ENCODE measurements at regions of chr6 and their contacts with region 1.

Region 1: GRCh38 chr6:108260809-108261569 is at the start of gene SNX3:
- DNase-seq: peak; percentile 88
- H3K4me3 Mint-ChIP-seq: peak within 1 kb of the TSS; percentile 90
- H3K27ac Mint-ChIP-seq: peak within 1 kb of the TSS; percentile 93
- H3K4me1 Mint-ChIP-seq: peaks cover 12% of the 10 kb centered on the region
- H3K27me3 Mint-ChIP-seq: peaks cover 6% of the 10 kb centered on the region
- total RNA-seq, gene SNX3: 68.5 and 72.5 TPM in 2 replicates

Region 2: DNA sequence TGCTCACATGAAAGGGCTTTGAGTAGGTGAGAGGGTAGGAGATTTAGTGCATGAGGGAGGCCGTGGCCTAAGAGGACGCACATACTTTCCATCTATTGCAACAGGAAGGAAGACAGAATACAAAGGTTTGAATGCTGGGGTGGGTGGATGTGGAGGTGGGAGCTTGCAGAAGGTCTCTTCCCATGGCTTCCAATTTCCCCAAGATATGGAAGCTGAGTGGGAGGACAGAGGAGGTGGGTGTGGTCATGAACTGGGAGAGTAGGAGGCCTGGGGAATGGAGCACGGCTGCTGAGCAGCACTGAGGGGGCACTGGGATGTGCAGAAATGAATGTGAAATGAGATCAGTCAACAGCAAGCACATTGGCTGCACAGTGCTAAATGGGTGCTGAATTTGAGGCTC is 507.2 kb before region 1 on chr6:
- intact Hi-C with region 1: no loop called
- DNase-seq: no peak
- H3K4me3 Mint-ChIP-seq: peak overlapping the region; percentile 2
- H3K27ac Mint-ChIP-seq: peak overlapping the region; percentile 65
- H3K4me1 Mint-ChIP-seq: peaks cover 36% of the 10 kb centered on the region
- H3K27me3 Mint-ChIP-seq: no peaks in the 10 kb centered on the region

Region 3: GRCh38 chr6:108074359-108075144 is 186.4 kb before region 1 on chr6 and contains the start of gene OSTM1:
- intact Hi-C with region 1: loop called (anchors 2 kb)
- DNase-seq: peak; percentile 92
- H3K4me3 Mint-ChIP-seq: peak within 1 kb of the TSS; percentile 85
- H3K27ac Mint-ChIP-seq: peak within 1 kb of the TSS; percentile 80
- H3K4me1 Mint-ChIP-seq: peaks cover 12% of the 10 kb centered on the region
- H3K27me3 Mint-ChIP-seq: peaks cover 25% of the 10 kb centered on the region
- total RNA-seq, gene OSTM1: 19.9 and 22.5 TPM in 2 replicates

Region 4: GRCh38 chr6:108250240-108250866 is 10.6 kb before region 1 on chr6:
- intact Hi-C with region 1: no loop called
- DNase-seq: no peak
- H3K4me3 Mint-ChIP-seq: no peak overlapping the region
- H3K27ac Mint-ChIP-seq: no peak overlapping the region
- H3K4me1 Mint-ChIP-seq: peaks cover 13% of the 10 kb centered on the region
- H3K27me3 Mint-ChIP-seq: no peaks in the 10 kb centered on the region

Region 5: GRCh38 chr6:108348655-108349349 is 87.8 kb after region 1 on chr6:
- intact Hi-C with region 1: loop called (anchors 5 kb)
- DNase-seq: no peak
- H3K4me3 Mint-ChIP-seq: no peak overlapping the region
- H3K27ac Mint-ChIP-seq: peak overlapping the region; percentile 64
- H3K4me1 Mint-ChIP-seq: peaks cover 27% of the 10 kb centered on the region
- H3K27me3 Mint-ChIP-seq: no peaks in the 10 kb centered on the region

Region 6: GRCh38 chr6:108492131-108492766 is 231.3 kb after region 1 on chr6:
- intact Hi-C with region 1: loop called (anchors 10 kb)
- DNase-seq: no peak
- H3K4me3 Mint-ChIP-seq: no peak overlapping the region
- H3K27ac Mint-ChIP-seq: no peak overlapping the region
- H3K4me1 Mint-ChIP-seq: no peaks in the 10 kb centered on the region
- H3K27me3 Mint-ChIP-seq: peaks cover 9% of the 10 kb centered on the region

Region 7: DNA sequence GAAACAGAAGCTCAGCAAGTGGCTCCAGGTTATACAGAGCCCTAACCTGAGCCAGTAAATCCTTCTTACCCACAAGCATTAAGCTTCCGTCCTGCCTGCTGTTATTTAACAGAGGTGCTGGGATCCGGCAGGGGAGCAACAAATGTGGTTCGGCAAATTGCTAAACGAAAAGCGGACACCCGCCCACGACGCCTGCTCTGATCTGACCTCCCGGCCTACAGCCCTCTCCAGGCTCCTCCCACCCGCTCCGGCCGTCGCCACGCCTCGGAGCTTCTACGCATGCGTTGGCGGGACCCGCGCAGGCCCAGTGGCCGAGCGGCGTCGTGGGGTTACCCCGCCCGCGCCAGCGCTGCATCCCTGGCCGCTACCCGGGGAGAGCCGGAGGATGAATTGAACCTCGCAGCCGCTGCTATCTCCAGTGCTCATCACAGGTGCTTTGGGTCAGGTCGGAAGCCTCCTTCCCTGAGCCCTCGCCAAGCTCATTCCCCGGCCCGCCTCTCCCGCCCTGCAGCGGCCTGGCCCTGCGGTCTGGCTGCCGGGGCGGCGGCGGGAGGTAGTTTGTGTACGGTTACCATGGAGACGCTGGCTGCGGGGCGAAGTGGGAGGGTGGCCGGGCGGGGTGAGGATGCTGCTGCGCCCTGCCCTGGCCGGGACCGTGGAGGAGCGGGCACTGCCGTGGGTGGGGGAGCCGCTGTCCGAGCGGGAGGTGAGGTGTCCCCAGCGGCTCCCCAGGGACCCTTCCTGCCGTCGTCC is 587.3 kb after region 1 on chr6 and contains the start of gene ARMC2:
- intact Hi-C with region 1: loop called (anchors 5 kb)
- DNase-seq: peak; percentile 88
- H3K4me3 Mint-ChIP-seq: peak within 1 kb of the TSS; percentile 89
- H3K27ac Mint-ChIP-seq: peak within 1 kb of the TSS; percentile 71
- H3K4me1 Mint-ChIP-seq: peaks cover 31% of the 10 kb centered on the region
- H3K27me3 Mint-ChIP-seq: peaks cover 25% of the 10 kb centered on the region
- total RNA-seq, gene ARMC2: 3.9 and 4.6 TPM in 2 replicates

Region 8: GRCh38 chr6:109482905-109483735 is 1222.1 kb after region 1 on chr6 and contains the start of gene ZBTB24:
- intact Hi-C with region 1: loop called (anchors 2 kb)
- DNase-seq: peak; percentile 87
- H3K4me3 Mint-ChIP-seq: peak within 1 kb of the TSS; percentile 98
- H3K27ac Mint-ChIP-seq: peak within 1 kb of the TSS; percentile 92
- H3K4me1 Mint-ChIP-seq: peaks cover 47% of the 10 kb centered on the region
- H3K27me3 Mint-ChIP-seq: peaks cover 1% of the 10 kb centered on the region
- total RNA-seq, gene ZBTB24: 19.5 and 20.8 TPM in 2 replicates